PC-3 (cell line): ENCODE measurements at regions of chr3 and their contacts with region 1.

Region 1: GRCh38 chr3:107271787-107272387 is 105.4 kb upstream of the CCDC54 start:
- DNase-seq: peak; percentile 60
- ATAC-seq: peak; percentile 88
- H3K4me3 ChIP-seq: no peak overlapping the region
- H3K27ac ChIP-seq: no peak overlapping the region
- H3K4me1 ChIP-seq: no peaks in the 10 kb centered on the region
- H3K27me3 ChIP-seq: no peaks in the 10 kb centered on the region
- CTCF ChIP-seq: peak; percentile 92

Region 2: DNA sequence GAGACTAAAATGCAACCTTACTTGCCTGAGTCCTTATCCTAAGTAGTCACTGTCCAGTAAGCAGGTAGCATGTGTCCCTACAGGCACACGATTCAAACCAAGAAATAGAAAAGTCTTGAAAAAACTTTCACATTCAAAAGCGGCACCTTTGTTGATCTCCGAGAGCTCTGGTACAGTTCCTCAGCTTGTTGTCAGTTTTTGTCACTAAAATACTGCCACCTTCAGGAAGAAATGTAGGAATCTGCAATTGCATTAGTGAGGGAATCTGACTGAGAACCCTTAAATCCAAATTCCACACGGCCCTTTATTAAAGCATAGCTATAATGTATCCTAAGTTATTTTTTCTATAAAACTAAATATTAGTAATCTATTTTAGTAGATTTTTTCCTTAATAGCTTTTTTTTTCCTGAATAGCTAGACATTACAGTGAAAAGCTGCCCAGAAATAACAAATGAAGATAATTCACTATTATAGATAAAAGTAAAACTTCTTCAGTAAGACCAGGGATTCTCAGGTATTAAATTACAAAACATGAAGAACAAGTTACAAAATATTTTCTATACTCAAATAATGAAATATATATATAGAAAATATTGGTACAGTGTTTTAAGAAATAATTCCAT is 149.4 kb after region 1 on chr3:
- CTCF ChIA-PET with region 1: interaction called, 29 read pairs
- POLR2A ChIA-PET with region 1: no interaction called
- intact Hi-C with region 1: loop called (anchors 1 kb)
- DNase-seq: peak; percentile 84
- ATAC-seq: peak; percentile 95
- H3K4me3 ChIP-seq: peak overlapping the region; percentile 65
- H3K27ac ChIP-seq: no peak overlapping the region
- H3K4me1 ChIP-seq: no peaks in the 10 kb centered on the region
- H3K27me3 ChIP-seq: no peaks in the 10 kb centered on the region
- CTCF ChIP-seq: peak; percentile 83

Region 3: GRCh38 chr3:107487490-107487889 is 215.6 kb after region 1 on chr3:
- CTCF ChIA-PET with region 1: interaction called, 10 read pairs
- POLR2A ChIA-PET with region 1: no interaction called
- intact Hi-C with region 1: no loop called
- DNase-seq: no peak
- ATAC-seq: no peak
- H3K4me3 ChIP-seq: no peak overlapping the region
- H3K27ac ChIP-seq: no peak overlapping the region
- H3K4me1 ChIP-seq: no peaks in the 10 kb centered on the region
- H3K27me3 ChIP-seq: no peaks in the 10 kb centered on the region
- CTCF ChIP-seq: no peak

Region 4: DNA sequence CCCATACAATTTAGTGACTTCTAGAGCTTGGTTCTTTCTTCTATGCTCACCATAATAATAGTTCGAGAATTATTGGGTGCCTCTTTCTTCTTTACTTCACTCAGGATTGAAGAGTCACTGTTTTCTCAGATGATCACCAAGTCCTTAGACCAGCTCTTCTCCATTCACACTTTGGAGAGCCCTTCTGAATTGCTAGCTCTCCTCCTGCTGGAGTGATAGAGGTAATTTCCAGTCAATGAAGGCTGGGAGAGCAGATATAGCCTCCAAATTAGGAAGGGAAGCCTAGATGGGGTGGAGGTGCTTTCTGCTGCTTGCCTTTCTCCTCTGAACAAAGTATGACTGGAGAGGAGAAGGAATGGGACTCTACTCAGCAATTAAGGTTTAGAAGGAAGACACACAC is 240.2 kb after region 1 on chr3:
- CTCF ChIA-PET with region 1: no interaction called
- POLR2A ChIA-PET with region 1: no interaction called
- intact Hi-C with region 1: loop called (anchors 1 kb)
- DNase-seq: peak; percentile 19
- ATAC-seq: peak; percentile 62
- H3K4me3 ChIP-seq: no peak overlapping the region
- H3K27ac ChIP-seq: no peak overlapping the region
- H3K4me1 ChIP-seq: no peaks in the 10 kb centered on the region
- H3K27me3 ChIP-seq: no peaks in the 10 kb centered on the region
- CTCF ChIP-seq: peak; percentile 22; the same call in 1 of the 2 replicates